IMR-90 (cell line): ENCODE measurements at regions of chr2 and their contacts with region 1.

Region 1: DNA sequence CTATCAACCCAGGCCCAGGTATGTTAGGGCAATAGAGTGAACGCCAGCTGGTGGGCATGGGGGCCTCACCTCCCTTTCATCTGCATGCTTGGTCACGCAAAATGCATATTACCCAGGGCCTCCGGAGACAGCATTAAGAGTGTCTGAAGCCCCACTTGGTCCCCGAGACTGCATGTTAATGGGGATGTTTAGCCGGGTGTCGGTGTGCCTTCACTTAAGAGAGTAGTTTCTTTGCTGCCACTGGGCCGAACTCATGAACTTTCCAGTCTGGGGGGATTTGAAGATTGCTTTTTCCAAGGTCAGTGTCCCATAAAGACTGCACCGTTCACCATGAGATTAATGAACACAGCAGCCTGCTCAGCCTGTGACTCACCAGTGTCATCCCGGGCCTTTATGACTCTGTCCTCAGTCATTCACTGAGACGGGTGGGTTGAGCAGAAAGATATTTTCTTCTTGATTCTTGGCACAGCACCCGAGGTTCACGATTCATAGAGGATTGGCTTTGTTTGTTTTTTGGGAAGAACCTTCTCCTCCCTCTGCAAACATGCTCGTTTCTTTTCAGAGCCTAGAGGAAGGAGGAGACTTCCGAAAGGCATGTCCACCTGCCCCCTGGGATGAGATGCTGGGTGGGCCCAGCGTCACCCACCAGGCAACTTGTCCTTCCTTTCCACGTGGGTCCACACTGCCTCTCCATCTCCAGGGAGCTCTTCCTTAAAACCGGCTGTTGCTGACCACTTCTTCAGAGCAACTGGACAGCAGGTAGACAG is 199.1 kb downstream of the GLI2 start:
- DNase-seq: peak; percentile 94
- ATAC-seq: peak; percentile 56
- H3K4me3 ChIP-seq: no peak overlapping the region
- H3K27ac ChIP-seq: peak overlapping the region; percentile 89
- H3K4me1 ChIP-seq: peaks cover 71% of the 10 kb centered on the region
- H3K27me3 ChIP-seq: no peaks in the 10 kb centered on the region
- CTCF ChIP-seq: no peak
- POLR2A ChIP-seq: peak; percentile 29; the same call in 1 of the 2 replicates
- RAD21 ChIP-seq: no peak; the same call in 1 of the 2 replicates

Region 2: DNA sequence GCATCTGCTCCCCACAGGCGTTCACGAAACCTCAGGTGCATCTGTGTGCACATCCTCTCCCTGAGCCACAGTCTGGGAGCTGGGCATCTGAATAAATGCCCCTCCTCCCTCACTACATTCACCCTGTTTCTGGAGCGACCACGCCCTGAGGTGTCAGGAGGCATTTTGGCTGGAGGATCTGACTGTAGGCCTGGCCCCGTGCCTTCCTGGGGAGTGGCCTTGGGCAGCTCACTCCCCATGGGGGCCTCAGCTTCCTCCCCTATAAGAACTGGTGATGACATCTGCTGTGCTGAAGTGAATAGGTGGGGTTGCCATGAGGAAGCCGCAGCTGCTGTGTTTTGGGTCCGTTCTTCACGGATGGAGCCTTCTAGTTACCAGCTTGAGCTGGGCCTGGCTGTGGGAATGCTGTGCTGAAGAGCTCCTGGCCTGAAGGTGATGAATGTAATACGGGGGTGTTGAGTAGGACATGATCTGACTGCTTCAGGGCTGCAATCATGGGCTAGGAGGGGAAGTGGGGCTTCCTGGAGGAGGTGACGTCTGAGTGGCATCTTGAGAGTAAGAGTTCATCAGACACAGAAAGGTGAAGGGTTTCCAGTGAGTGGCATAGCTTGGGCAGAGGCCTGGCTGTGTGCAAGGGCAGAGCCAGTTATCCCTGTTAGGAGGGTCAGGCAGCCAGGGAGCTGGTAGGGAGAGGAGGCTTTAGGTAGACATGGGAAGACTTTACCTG is 140.9 kb before region 1 on chr2:
- CTCF ChIA-PET with region 1: no interaction called
- POLR2A ChIA-PET with region 1: no interaction called
- dilution Hi-C with region 1: no loop called
- in situ Hi-C with region 1: no loop called
- intact Hi-C with region 1: no loop called
- DNase-seq: no peak
- ATAC-seq: no peak
- H3K4me3 ChIP-seq: no peak overlapping the region
- H3K27ac ChIP-seq: 0 out of 2 replicates have a peak overlapping the region, but pooled peaks have one; percentile 24
- H3K4me1 ChIP-seq: peaks cover 25% of the 10 kb centered on the region
- H3K27me3 ChIP-seq: no peaks in the 10 kb centered on the region
- CTCF ChIP-seq: no peak
- POLR2A ChIP-seq: no peak
- RAD21 ChIP-seq: no peak

Region 3: DNA sequence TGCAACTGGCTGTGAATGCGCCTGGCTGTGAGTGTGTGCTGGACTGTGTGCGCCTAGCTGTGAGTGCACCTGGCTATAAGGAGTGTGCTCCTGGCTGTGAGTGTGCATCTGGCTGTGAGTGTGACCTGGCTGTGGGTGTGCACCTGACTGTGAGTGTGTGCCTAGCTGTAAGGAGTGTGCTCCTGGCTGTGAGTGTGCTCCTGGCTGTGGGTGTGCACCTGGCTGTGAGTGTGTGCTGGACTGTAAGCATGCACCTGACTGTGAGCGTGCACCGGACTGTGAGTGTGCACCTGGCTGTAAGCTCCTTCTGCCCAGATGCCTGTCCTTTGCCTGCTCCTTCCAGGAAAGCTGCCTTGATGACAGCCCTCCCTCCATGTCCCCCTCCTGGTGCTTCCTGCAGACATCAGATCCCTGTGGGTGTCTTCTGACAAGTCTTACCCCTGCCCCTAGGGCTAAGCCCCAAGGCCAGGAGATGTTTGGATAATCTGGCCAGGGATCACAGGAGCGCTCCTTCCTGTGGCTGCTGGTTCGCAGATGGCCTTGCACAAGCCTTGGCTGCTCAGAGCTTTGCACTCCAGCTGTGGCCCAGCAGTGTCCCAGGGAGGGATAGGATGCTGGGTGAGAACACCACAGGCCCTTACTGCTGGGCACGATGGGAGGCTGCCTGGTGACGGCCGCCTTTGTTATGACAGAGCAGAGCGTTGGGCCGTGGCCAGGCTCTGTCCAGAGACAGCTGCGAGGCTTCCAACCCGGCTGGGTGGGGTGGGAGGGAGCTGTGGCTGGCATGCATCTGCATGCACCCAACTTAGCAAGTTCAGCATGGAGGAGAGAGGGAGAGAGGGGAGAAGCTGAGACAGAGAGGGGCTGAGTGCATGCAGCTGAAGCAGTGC is 109.1 kb before region 1 on chr2:
- CTCF ChIA-PET with region 1: no interaction called
- POLR2A ChIA-PET with region 1: no interaction called
- dilution Hi-C with region 1: no loop called
- in situ Hi-C with region 1: no loop called
- intact Hi-C with region 1: loop called (anchors 5 kb)
- DNase-seq: peak; percentile 90
- ATAC-seq: peak; percentile 92
- H3K4me3 ChIP-seq: no peak overlapping the region
- H3K27ac ChIP-seq: peak overlapping the region; percentile 63
- H3K4me1 ChIP-seq: peaks cover 33% of the 10 kb centered on the region
- H3K27me3 ChIP-seq: no peaks in the 10 kb centered on the region
- CTCF ChIP-seq: no peak
- POLR2A ChIP-seq: no peak
- RAD21 ChIP-seq: no peak

Region 4: GRCh38 chr2:120867290-120868241 is 67.2 kb before region 1 on chr2:
- CTCF ChIA-PET with region 1: no interaction called
- POLR2A ChIA-PET with region 1: no interaction called
- dilution Hi-C with region 1: no loop called
- in situ Hi-C with region 1: no loop called
- intact Hi-C with region 1: loop called (anchors 5 kb)
- DNase-seq: peak; percentile 77
- ATAC-seq: peak; percentile 83
- H3K4me3 ChIP-seq: peak overlapping the region; percentile 29
- H3K27ac ChIP-seq: peak overlapping the region; percentile 83
- H3K4me1 ChIP-seq: peaks cover 43% of the 10 kb centered on the region
- H3K27me3 ChIP-seq: no peaks in the 10 kb centered on the region
- CTCF ChIP-seq: 0 out of 2 replicates have a peak, but pooled peaks have one; percentile 1
- POLR2A ChIP-seq: peak; percentile 62
- RAD21 ChIP-seq: peak; percentile 11; the same call in 1 of the 2 replicates

Region 5: DNA sequence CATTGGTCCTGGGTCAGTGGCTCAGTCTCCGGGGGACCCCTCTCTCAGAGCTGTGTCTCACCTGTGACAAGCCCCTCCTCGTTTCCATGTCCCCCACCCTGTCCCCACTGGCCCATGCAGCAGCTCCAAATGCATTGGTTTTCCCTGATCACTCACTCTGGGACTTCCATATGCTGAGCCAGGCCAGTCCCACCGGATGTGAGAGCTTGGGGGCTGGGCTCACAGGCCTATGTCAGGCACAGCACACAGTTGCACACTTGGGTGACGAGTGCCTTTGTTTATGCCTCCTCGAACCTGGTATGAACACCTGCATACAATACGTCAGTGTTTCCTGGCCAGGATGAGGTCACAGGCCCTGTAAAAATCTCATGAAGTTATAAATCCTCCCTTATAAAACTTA is 117.8 kb after region 1 on chr2:
- CTCF ChIA-PET with region 1: no interaction called
- POLR2A ChIA-PET with region 1: no interaction called
- dilution Hi-C with region 1: no loop called
- in situ Hi-C with region 1: no loop called
- intact Hi-C with region 1: no loop called
- DNase-seq: no peak
- ATAC-seq: no peak
- H3K4me3 ChIP-seq: no peak overlapping the region
- H3K27ac ChIP-seq: no peak overlapping the region
- H3K4me1 ChIP-seq: no peaks in the 10 kb centered on the region
- H3K27me3 ChIP-seq: peaks cover 74% of the 10 kb centered on the region
- CTCF ChIP-seq: no peak
- POLR2A ChIP-seq: no peak
- RAD21 ChIP-seq: no peak

Region 6: GRCh38 chr2:121333834-121334558 is 399.2 kb after region 1 on chr2:
- CTCF ChIA-PET with region 1: no interaction called
- POLR2A ChIA-PET with region 1: no interaction called
- dilution Hi-C with region 1: no loop called
- in situ Hi-C with region 1: no loop called
- intact Hi-C with region 1: no loop called
- DNase-seq: no peak
- ATAC-seq: no peak
- H3K4me3 ChIP-seq: no peak overlapping the region
- H3K27ac ChIP-seq: no peak overlapping the region
- H3K4me1 ChIP-seq: no peaks in the 10 kb centered on the region
- H3K27me3 ChIP-seq: peaks cover 4% of the 10 kb centered on the region; the same call in 1 of the 2 replicates
- CTCF ChIP-seq: no peak
- POLR2A ChIP-seq: no peak
- RAD21 ChIP-seq: no peak